Calu3 (cell line): ENCODE measurements at regions of chr19 and their contacts with region 1.

Region 1: DNA sequence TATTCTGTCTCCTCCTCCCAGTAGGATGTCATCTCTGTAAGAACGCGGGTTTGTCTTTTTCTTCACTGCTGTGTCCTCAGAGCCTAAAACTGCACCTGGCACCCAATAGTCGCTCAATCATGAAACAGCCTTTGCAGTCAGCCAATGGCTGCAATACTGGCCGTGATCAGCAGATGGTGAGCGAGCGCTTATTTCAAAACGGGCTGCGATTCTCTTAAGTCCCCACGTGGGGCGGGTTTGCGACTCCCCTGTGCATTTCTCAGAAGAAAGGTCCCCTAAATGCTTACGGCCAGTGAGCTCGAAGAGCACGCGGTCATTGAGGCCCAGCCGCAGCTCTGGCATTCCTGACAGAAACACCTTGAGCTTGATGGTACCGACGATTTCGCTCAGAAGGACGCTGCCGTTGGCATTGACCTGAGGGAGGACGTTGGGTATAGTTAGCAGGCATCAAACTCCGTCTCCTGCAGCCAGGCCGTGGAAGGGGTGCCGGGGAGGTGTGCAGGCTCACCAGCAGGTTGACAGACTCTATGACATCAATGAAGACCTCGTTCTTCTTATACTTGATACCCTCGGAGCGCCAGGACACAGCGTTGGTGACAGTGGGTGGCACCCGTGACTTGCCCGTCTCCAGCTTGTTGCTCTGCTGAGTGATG is 6.0 kb downstream of the AP1M2 start:
- DNase-seq: peak; percentile 78
- H3K4me3 Mint-ChIP-seq: no peak overlapping the region
- H3K27ac Mint-ChIP-seq: no peak overlapping the region
- H3K4me1 Mint-ChIP-seq: no peaks in the 10 kb centered on the region
- H3K27me3 Mint-ChIP-seq: no peaks in the 10 kb centered on the region
- CTCF ChIP-seq: peak; percentile 95

Region 2: DNA sequence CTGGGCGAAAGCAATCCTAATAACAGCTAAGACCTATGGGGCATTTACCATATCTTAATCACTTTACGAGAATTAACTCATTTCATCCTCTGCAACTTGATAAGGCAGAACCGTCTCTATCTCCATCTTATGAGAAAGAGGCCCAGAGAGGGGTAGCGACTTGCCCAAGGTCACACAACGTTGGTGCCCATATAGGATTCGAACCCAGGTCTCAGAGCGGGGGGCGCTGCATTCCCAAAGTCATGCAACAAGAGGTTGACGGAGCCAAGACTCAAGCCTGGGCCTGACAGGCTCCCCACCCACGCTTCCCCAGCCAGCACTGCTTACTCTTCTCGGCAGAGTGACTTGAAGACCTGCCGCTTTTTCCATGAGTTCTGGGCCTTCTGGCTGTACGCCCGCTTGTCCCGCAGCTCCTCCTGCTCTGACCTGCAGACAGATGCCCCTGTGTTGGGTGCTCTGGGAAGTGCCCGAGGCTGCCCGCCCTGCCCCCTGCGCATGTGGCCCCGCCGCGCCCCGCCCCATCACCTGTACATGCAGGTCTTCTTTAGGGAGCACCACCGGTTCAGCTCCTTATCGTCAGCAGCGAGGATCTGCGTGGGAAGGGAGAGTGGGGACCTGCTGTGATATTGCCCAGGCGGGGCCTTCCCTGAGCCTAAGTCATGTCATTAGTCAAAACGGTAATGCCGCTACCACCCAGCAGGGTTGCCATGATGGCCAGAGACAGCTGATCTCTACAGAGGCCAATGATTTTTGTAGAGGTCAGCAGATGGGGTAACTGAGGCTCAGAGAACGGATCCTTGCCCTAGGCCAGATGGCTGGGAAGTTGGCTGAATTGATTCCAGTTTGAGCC is 26.1 kb before region 1 on chr19:
- CTCF ChIA-PET with region 1: no interaction called
- intact Hi-C with region 1: no loop called
- DNase-seq: no peak
- H3K4me3 Mint-ChIP-seq: no peak overlapping the region
- H3K27ac Mint-ChIP-seq: no peak overlapping the region
- H3K4me1 Mint-ChIP-seq: no peaks in the 10 kb centered on the region
- H3K27me3 Mint-ChIP-seq: no peaks in the 10 kb centered on the region
- CTCF ChIP-seq: no peak

Region 3: DNA sequence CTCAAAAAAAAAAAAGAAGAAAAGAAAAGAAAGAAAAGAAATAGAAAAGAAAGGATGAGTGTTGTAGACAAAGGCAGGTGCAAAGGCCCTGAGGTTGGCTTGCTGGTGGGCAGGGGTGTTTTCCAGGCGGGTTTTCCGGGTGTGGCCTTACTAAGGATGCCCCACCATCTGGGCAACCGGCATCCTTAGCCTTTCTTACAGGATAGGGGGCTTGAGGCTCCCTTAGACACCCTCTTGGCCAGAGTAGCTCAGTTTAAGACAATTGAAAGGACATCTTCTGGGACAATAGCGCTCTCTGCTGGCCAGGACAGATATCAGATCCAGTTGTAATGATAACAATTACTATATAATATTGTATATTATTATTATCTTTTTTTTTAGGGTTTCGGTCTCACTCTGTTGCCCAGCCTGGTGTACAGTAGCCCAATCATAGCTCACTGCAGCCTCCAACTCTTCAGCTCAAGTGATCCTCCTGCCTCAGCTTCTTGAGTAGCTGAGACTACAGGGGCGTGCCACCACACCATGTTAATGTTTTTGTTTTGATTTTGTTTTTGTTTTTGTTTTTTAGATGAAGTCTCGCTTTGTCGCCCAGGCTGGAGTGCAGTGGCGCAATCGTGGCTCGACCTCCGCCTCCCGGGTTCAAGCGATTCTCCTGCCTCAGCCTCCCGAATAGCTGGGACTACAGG is 118.7 kb after region 1 on chr19:
- CTCF ChIA-PET with region 1: interaction called, 10 read pairs
- intact Hi-C with region 1: loop called (anchors 2 kb)
- DNase-seq: peak; percentile 47
- H3K4me3 Mint-ChIP-seq: no peak overlapping the region
- H3K27ac Mint-ChIP-seq: no peak overlapping the region
- H3K4me1 Mint-ChIP-seq: peaks cover 15% of the 10 kb centered on the region
- H3K27me3 Mint-ChIP-seq: peaks cover 15% of the 10 kb centered on the region
- CTCF ChIP-seq: peak; percentile 34